ENCODE measurements at regions of chr18 and their contacts with region 1.

Region 1: GRCh38 chr18:47587587-47587986 is 336.1 kb upstream of the SKOR2 start:
- DNase-seq: no peak
- H3K4me3 ChIP-seq: no peak overlapping the region
- H3K27ac ChIP-seq: no peak overlapping the region
- H3K4me1 ChIP-seq: no peaks in the 10 kb centered on the region
- H3K27me3 ChIP-seq: no peaks in the 10 kb centered on the region
- CTCF ChIP-seq: no peak

Region 2: GRCh38 chr18:47490882-47491281 is 96.7 kb before region 1 on chr18:
- CTCF ChIA-PET with region 1: no interaction called
- dilution Hi-C with region 1: loop called (anchors 5 kb)
- in situ Hi-C with region 1: no loop called
- intact Hi-C with region 1: no loop called
- DNase-seq: no peak
- H3K4me3 ChIP-seq: no peak overlapping the region
- H3K27ac ChIP-seq: no peak overlapping the region
- H3K4me1 ChIP-seq: no peaks in the 10 kb centered on the region
- H3K27me3 ChIP-seq: no peaks in the 10 kb centered on the region
- CTCF ChIP-seq: no peak

Region 3: GRCh38 chr18:47512056-47512455 is 75.5 kb before region 1 on chr18:
- CTCF ChIA-PET with region 1: no interaction called
- dilution Hi-C with region 1: no loop called
- in situ Hi-C with region 1: no loop called
- intact Hi-C with region 1: no loop called
- DNase-seq: no peak
- H3K4me3 ChIP-seq: no peak overlapping the region
- H3K27ac ChIP-seq: no peak overlapping the region
- H3K4me1 ChIP-seq: no peaks in the 10 kb centered on the region
- H3K27me3 ChIP-seq: no peaks in the 10 kb centered on the region
- CTCF ChIP-seq: no peak

Region 4: GRCh38 chr18:47832348-47832747 is 244.8 kb after region 1 on chr18:
- CTCF ChIA-PET with region 1: no interaction called
- dilution Hi-C with region 1: no loop called
- in situ Hi-C with region 1: no loop called
- intact Hi-C with region 1: no loop called
- DNase-seq: no peak
- H3K4me3 ChIP-seq: no peak overlapping the region
- H3K27ac ChIP-seq: no peak overlapping the region
- H3K4me1 ChIP-seq: no peaks in the 10 kb centered on the region
- H3K27me3 ChIP-seq: no peaks in the 10 kb centered on the region
- CTCF ChIP-seq: no peak

Measured in mammary epithelial cell (primary cell).